ENCODE measurements at regions of chr1 and their contacts with region 1.

Region 1: GRCh38 chr1:62407405-62408009 is 29.3 kb upstream of the USP1 start:
- DNase-seq: peak; percentile 51 to 69 (median 56)
- ATAC-seq: peak; percentile 85
- H3K4me3 ChIP-seq: no peak overlapping the region
- H3K27ac ChIP-seq: no peak overlapping the region
- H3K4me1 ChIP-seq: no peaks in the 10 kb centered on the region
- H3K27me3 ChIP-seq: peaks cover 12 to 34% of the 10 kb centered on the region in 2 experiments
- CTCF ChIP-seq: peak; percentile 53 to 80 (median 66); a peak in 5 of 6 replicates
- EP300 ChIP-seq: no peak
- POLR2A ChIP-seq: no peak
- RAD21 ChIP-seq: peak; percentile 77 to 85

Region 2: GRCh38 chr1:62082456-62083363 is 324.8 kb before region 1 on chr1:
- CTCF ChIA-PET with region 1: no interaction called
- POLR2A ChIA-PET with region 1: no interaction called
- in situ Hi-C with region 1: no loop called
- intact Hi-C with region 1: loop called (anchors 1 kb)
- DNase-seq: peak; percentile 51 to 65 (median 58)
- ATAC-seq: peak; percentile 93
- H3K4me3 ChIP-seq: peak overlapping the region; percentile 15
- H3K27ac ChIP-seq: no peak overlapping the region
- H3K4me1 ChIP-seq: no peaks in the 10 kb centered on the region; a peak in 1 of 5 replicates
- H3K27me3 ChIP-seq: peaks cover 4 to 16% of the 10 kb centered on the region in 2 experiments; a peak in 3 of 5 replicates
- CTCF ChIP-seq: peak; percentile 69 to 86 (median 84)
- EP300 ChIP-seq: no peak
- POLR2A ChIP-seq: no peak
- RAD21 ChIP-seq: peak; percentile 38 to 66; a peak in 3 of 4 replicates

Region 3: GRCh38 chr1:62175568-62176179 is 231.8 kb before region 1 on chr1:
- CTCF ChIA-PET with region 1: interaction called, 16 read pairs
- POLR2A ChIA-PET with region 1: no interaction called
- in situ Hi-C with region 1: loop called (anchors 5 kb)
- intact Hi-C with region 1: loop called (anchors 1 kb)
- DNase-seq: peak; percentile 21 to 46 (median 30)
- ATAC-seq: peak; percentile 75
- H3K4me3 ChIP-seq: no peak overlapping the region
- H3K27ac ChIP-seq: no peak overlapping the region
- H3K4me1 ChIP-seq: no peaks in the 10 kb centered on the region
- H3K27me3 ChIP-seq: peaks cover 4 to 5% of the 10 kb centered on the region in 2 experiments; a peak in 3 of 5 replicates
- CTCF ChIP-seq: peak; percentile 55 to 82 (median 60); a peak in 5 of 6 replicates
- EP300 ChIP-seq: no peak
- POLR2A ChIP-seq: no peak
- RAD21 ChIP-seq: peak; percentile 66 to 87

Region 4: GRCh38 chr1:62294261-62294660 is 113.2 kb before region 1 on chr1:
- CTCF ChIA-PET with region 1: no interaction called
- POLR2A ChIA-PET with region 1: no interaction called
- in situ Hi-C with region 1: no loop called
- intact Hi-C with region 1: loop called (anchors 1 kb)
- DNase-seq: peak; percentile 22 to 38 (median 32)
- ATAC-seq: peak; percentile 73; the same call in 2 of the 3 replicates
- H3K4me3 ChIP-seq: no peak overlapping the region
- H3K27ac ChIP-seq: no peak overlapping the region
- H3K4me1 ChIP-seq: no peaks in the 10 kb centered on the region
- H3K27me3 ChIP-seq: peaks cover 7 to 22% of the 10 kb centered on the region in 2 experiments; a peak in 3 of 5 replicates
- CTCF ChIP-seq: peak; percentile 31 to 49 (median 31); a peak in 3 of 6 replicates
- EP300 ChIP-seq: no peak
- POLR2A ChIP-seq: no peak
- RAD21 ChIP-seq: peak in 1 of 2 experiments; percentile 28; a peak in 2 of 4 replicates

Region 5: DNA sequence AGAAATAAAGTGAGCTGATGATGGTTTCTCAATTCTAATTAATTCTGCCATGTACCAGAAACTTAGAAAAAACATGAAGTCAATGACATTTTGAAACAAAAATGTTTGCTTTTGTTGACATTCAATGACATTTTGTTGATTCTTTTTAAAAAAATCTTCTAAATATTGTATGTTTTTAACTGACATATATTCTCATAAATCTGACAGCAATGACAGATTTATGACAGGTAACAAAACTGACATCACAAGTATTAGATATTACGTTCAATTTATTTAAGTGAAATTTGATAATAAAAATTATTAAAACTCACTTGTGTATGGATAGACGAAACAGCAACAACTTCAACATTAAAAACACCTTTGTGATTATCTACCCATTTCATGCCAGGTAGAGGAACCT is 153.8 kb after region 1 on chr1:
- CTCF ChIA-PET with region 1: no interaction called
- POLR2A ChIA-PET with region 1: no interaction called
- in situ Hi-C with region 1: no loop called
- intact Hi-C with region 1: no loop called
- DNase-seq: no peak
- ATAC-seq: no peak
- H3K4me3 ChIP-seq: no peak overlapping the region
- H3K27ac ChIP-seq: no peak overlapping the region
- H3K4me1 ChIP-seq: no peaks in the 10 kb centered on the region
- H3K27me3 ChIP-seq: no peaks in the 10 kb centered on the region
- CTCF ChIP-seq: no peak
- EP300 ChIP-seq: no peak
- POLR2A ChIP-seq: no peak
- RAD21 ChIP-seq: no peak

Region 6: GRCh38 chr1:62746085-62746808 is 338.7 kb after region 1 on chr1:
- CTCF ChIA-PET with region 1: no interaction called
- POLR2A ChIA-PET with region 1: no interaction called
- in situ Hi-C with region 1: no loop called
- intact Hi-C with region 1: loop called (anchors 10 kb)
- DNase-seq: peak in 2 of 4 experiments; percentile 26 to 41
- ATAC-seq: peak; percentile 70; the same call in 2 of the 3 replicates
- H3K4me3 ChIP-seq: no peak overlapping the region
- H3K27ac ChIP-seq: no peak overlapping the region
- H3K4me1 ChIP-seq: no peaks in the 10 kb centered on the region
- H3K27me3 ChIP-seq: no peaks in the 10 kb centered on the region
- CTCF ChIP-seq: peak; percentile 50 to 80 (median 53); a peak in 5 of 6 replicates
- EP300 ChIP-seq: no peak
- POLR2A ChIP-seq: no peak
- RAD21 ChIP-seq: peak; percentile 89 to 91